ENCODE measurements at regions of chr2 and their contacts with region 1.

Region 1: GRCh38 chr2:150191349-150191748 is 296.1 kb downstream of the RND3 start:
- DNase-seq: no peak

Region 2: DNA sequence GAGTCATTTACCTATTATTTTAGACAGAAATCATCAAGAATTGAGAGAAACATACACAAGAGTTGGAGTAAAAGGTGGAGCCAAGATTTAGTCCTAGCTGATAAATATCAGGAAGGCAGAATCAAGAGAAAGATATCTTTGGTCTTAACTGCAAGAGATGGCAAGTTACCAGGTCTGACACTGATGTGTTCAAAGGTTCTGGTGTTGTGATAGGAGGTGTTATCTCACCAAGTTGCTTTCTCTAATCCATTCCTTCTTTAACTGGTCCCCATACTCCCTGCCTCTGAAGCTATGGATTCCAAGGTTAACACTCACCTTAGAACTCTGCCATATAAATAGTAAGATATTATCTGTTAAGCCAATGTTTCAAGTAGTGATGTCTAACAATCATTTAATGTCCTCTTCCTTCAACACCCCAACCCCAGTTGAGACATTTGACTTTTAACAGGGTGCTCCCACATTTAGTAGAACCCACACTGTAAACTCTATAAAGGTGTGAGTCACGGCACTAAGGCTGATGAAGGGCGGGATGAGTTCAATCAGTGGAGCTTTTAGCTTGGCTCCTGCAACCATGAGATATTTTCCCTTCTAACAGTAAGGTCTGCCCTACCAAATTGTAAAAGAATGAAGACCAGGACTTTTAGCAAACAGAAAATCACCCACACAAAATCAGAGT is 37.6 kb before region 1 on chr2:
- intact Hi-C with region 1: loop called in 1 of 2 experiments (anchors 1 kb)
- DNase-seq: no peak

Region 3: DNA sequence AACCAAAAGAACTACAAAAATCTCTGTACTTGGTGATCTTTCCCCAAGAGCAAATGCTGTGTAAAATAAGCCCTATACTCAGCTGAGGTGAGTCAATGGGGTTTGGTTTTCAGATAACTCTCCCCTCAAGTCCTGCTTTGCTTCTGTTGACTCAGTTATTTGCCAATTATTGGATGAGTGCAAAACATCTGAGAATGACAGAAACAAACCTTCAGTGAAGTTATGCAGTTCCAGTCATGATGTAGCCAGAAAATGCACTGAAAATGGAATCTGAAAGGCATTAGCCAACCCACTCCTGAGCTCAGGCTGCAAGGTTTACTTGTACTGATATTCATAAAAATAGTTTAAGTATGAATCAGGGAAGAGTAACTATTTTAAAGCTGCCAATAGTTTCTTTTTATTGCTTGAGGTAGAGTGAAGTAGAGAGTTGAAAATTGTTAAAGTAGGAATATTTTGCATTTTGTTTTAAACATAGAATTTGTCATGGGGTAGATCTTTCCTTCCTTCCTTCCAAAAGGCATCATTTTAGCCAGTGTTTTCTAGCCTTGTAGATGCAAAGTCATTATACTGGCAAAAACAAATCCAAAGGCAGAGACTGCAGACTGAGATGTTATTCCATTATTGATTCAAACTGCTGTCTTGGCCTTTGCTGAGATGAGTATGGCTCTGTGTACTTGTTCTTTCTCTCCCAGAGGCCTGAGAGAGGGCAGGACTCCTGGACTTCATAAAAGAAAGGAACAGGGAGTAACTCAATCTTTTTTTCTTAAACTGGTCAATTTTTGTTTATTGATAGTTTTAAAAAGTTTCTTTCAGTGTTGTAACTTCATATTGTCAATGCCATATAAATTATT is 80.8 kb after region 1 on chr2:
- intact Hi-C with region 1: no loop called
- DNase-seq: no peak

Measured in posterior vena cava (tissue), 2 donors.